ENCODE measurements at regions of chr6 and their contacts with region 1.

Region 1: DNA sequence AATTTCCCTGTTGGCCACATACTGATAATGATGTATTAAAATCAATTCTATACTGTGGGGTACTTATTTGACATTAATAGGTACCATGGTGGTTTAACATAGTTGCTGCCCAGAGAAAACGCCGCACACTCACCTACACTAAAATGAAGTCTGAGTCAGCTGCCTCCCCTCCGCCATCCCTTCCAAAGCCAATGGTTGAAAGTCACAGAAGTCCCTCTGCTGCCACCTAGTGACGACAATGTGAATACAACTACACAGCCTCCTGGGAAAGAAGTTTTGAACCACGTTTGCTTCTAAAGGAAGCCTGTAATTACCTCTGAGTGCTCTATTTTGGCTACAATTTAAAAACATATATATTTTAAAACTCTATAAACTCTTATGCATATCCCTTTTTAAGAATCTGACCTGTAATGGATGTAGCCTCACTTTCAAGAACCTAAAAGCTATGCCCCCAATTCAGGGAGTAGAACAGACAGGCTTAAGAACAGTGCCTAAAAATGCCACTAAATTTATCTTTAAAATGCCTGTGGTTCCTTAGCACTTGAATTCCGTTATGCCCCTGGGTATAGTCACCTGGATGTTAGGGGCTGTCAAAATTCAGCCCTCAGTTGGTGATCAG is 20.6 kb upstream of the ECI2 start:
- DNase-seq: peak; percentile 63 to 76
- ATAC-seq: peak; percentile 95 to 96
- H3K4me3 ChIP-seq: no peak overlapping the region
- H3K27ac ChIP-seq: peak overlapping the region; percentile 37 to 50; a peak in 2 of 6 replicates
- H3K4me1 ChIP-seq: peaks cover 5% of the 10 kb centered on the region; the same call in 2 of the 3 replicates
- CTCF ChIP-seq: peak; percentile 74
- EP300 ChIP-seq: no peak
- POLR2A ChIP-seq: no peak
- RAD21 ChIP-seq: peak; percentile 82 to 83

Region 2: DNA sequence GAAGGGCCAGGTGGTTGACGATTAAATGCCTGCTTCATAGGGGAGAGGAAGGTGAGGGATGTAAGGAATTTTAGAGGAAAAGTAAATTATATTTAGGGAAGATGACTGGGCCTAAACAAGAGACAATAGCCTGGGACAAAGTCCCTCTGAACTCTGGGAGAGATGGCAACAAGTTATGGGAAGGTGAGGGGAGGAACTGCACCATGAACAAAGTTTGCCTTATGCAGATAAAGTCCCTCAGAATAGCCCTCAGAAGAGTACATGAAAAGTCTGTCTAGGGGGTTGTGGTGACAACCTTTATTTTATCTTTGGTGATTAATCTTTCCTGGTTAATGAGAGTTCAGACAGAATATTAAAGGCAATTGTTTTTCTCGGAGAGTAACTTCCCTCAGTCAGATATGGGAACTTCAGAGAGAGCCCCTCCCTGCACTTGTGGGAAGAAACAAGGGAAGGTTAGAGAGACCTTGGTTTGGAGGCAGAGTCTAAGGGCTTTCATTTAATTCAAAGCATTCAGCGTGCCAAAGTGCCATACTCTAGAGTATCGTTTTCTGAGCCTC is 49.9 kb before region 1 on chr6:
- CTCF ChIA-PET with region 1: no interaction called
- POLR2A ChIA-PET with region 1: no interaction called
- DNase-seq: no peak
- ATAC-seq: no peak
- H3K4me3 ChIP-seq: no peak overlapping the region
- H3K27ac ChIP-seq: no peak overlapping the region
- H3K4me1 ChIP-seq: peaks cover 7% of the 10 kb centered on the region; the same call in 1 of the 3 replicates
- CTCF ChIP-seq: no peak
- EP300 ChIP-seq: no peak
- POLR2A ChIP-seq: no peak
- RAD21 ChIP-seq: no peak

Region 3: DNA sequence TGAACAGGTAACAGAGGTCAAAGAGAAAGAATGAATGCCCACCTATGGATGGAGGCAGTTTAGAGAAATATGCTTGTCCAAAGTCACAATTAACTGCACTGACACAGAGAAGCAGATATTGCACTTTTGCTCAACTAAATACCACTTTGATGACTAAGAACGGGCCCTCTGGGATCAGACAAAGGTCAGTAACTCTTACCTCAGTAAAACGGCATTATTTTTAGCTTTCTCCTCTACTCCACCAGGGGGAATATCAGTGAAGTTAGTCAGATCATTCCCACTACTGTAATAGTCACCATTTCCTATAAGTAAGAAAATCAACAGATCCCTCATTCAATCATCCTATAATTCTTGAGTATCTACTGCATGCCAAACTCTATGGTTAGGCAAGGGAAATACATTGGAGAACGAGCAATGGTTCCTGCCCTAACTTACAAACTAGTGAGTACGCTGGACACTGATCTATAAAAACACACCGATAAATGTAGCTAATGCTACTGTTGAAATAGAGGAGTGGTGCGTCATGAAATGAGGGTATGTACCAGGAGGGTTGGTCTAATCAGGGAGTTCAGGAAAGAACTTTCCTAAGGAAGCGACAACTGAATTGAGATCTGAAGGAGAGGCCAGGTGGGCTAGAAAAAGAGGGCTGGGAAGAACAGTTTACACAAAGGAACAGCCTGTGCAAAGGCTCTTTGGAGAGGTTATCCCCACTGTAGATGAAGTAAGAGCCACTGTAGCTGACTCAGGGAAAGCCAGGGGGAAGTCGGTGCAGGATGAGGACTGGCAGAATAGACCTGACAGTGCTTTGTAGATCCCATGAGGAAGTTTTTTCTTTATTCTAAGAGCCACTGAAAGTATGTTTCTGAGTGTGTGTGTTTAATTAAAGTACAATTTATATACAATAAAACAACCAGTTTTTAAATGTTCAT is 29.8 kb before region 1 on chr6:
- CTCF ChIA-PET with region 1: interaction called, 12 read pairs
- POLR2A ChIA-PET with region 1: no interaction called
- DNase-seq: peak; percentile 61 to 68
- ATAC-seq: peak; percentile 98
- H3K4me3 ChIP-seq: no peak overlapping the region
- H3K27ac ChIP-seq: peak overlapping the region; percentile 63 to 80; a peak in 5 of 6 replicates
- H3K4me1 ChIP-seq: peaks cover 24% of the 10 kb centered on the region
- CTCF ChIP-seq: 0 out of 3 replicates have a peak, but pooled peaks have one; percentile 21
- EP300 ChIP-seq: no peak
- POLR2A ChIP-seq: no peak
- RAD21 ChIP-seq: 0 out of 5 replicates have a peak, but pooled peaks of 1 of the 2 experiments have one; percentile 22

Region 4: DNA sequence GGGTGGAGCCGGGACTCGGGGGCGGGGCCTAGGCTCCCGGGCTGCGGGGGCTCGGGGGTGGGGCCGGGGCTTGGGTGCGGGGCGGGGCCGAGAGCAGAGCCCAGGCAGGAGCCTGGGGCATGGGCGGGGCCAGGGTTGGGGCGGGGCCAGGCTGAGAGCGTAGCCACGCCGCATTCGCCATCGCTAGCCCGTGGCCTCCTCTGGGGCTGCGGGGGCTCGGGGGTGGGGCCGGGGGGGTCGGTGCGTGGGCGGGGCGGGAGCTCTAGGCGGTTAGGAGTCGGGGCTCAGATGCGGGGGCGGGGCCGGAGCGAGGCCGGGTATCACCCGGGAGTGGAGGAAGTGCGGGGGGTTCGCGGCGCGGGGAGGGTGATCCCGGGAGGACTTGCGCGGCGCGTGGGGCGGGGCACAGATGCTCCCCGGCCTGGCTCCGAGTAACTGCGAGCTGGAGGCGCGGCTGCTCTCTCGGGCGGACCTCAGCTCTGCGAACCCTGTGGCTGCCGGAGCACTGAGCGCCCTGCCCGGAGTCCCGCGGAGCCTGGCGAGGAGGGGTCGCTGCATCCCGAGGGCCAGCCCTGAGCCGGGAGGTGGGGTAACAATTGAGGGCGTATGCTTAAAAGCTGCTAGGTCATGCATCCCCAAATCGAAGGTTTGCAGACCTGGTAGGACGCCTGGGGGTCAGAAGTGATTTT is 20.1 kb before region 1 on chr6:
- CTCF ChIA-PET with region 1: interaction called, 28 read pairs
- POLR2A ChIA-PET with region 1: interaction called, 3 read pairs
- DNase-seq: peak; percentile 74 to 90
- ATAC-seq: peak; percentile 81 to 84
- H3K4me3 ChIP-seq: peak overlapping the region; percentile 65
- H3K27ac ChIP-seq: peak overlapping the region; percentile 87 to 92
- H3K4me1 ChIP-seq: peaks cover 8% of the 10 kb centered on the region; the same call in 2 of the 3 replicates
- CTCF ChIP-seq: no peak
- EP300 ChIP-seq: no peak
- POLR2A ChIP-seq: peak; percentile 81
- RAD21 ChIP-seq: no peak

Region 5: DNA sequence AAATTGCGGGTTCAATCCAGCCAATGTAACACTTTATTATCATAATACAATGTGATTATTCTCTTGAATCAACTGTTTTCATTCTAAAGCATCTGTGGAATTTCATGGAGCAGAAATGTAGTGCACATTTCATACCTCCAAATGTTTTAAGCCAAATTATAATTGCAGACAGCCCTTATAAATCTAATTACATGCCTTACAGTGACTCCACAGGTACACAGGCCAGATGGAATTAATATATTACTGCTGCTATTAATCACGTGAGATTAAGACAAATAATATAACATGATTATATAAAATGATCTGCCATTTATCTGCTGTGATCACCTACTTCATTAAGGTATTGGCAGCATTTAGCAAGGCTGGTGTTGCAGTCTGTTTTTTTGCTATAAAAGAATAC is 10.9 kb before region 1 on chr6:
- CTCF ChIA-PET with region 1: interaction called, 10 read pairs
- POLR2A ChIA-PET with region 1: no interaction called
- DNase-seq: no peak
- ATAC-seq: no peak
- H3K4me3 ChIP-seq: no peak overlapping the region
- H3K27ac ChIP-seq: no peak overlapping the region
- H3K4me1 ChIP-seq: no peaks in the 10 kb centered on the region
- CTCF ChIP-seq: no peak
- EP300 ChIP-seq: no peak
- POLR2A ChIP-seq: no peak
- RAD21 ChIP-seq: no peak

Region 6: DNA sequence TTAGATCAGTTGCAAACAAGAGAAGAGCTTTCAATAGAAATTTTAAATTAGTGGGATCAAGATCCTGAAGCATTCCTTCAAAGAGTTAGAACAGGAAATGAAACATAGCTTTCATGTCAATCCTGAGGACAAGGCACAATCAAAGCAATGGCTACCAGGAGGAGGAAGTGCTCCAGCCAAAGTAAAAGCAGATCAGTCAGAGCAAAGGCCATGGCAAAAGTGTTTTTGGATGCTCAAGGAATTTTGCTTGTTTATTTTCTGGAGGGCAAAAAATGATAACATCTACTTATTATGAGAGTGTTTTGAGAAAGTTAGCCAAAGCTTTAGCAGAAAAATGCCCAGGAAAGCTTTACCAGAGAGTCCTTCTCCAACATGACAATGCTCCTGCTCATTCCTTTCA is 40.4 kb after region 1 on chr6:
- CTCF ChIA-PET with region 1: no interaction called
- POLR2A ChIA-PET with region 1: no interaction called
- DNase-seq: no peak
- ATAC-seq: no peak
- H3K4me3 ChIP-seq: no peak overlapping the region
- H3K27ac ChIP-seq: no peak overlapping the region
- H3K4me1 ChIP-seq: no peaks in the 10 kb centered on the region
- CTCF ChIP-seq: no peak
- EP300 ChIP-seq: no peak
- POLR2A ChIP-seq: no peak
- RAD21 ChIP-seq: no peak

Region 7: DNA sequence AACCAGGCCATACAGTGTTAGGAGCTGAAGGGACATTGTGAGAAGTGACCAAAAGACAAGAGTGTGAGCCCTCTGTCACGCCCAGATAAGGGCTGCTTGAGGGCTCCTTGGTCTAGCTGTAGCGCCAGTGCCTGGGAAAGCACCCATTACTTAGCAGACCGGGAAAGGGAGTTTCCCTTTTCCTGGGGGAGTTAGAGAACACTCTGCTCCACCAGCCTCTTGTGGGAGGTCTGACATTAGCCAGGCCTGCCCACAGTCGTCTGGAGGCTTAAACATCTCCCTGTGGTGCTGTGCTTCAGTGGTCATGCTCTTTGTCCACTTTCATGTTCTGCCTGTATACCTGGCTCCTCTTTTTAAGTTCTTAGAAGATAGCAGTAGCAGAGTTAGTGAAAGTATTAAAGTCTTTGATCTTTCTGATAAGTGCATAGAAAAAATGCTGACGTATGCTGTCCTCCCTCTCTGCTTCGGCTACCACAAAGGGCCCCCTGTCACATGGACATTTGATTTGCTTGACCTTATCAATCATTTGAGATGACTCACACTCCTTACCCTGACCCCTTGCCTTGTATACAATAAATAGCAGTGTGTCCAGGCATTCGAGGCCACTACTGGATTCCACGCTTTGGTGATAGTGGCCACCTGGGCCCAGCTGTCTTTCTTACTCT is 181.0 kb after region 1 on chr6:
- CTCF ChIA-PET with region 1: no interaction called
- POLR2A ChIA-PET with region 1: no interaction called
- DNase-seq: no peak
- ATAC-seq: no peak
- H3K4me3 ChIP-seq: no peak overlapping the region
- H3K27ac ChIP-seq: no peak overlapping the region
- H3K4me1 ChIP-seq: no peaks in the 10 kb centered on the region
- CTCF ChIP-seq: no peak
- EP300 ChIP-seq: no peak
- POLR2A ChIP-seq: no peak
- RAD21 ChIP-seq: no peak

Region 8: DNA sequence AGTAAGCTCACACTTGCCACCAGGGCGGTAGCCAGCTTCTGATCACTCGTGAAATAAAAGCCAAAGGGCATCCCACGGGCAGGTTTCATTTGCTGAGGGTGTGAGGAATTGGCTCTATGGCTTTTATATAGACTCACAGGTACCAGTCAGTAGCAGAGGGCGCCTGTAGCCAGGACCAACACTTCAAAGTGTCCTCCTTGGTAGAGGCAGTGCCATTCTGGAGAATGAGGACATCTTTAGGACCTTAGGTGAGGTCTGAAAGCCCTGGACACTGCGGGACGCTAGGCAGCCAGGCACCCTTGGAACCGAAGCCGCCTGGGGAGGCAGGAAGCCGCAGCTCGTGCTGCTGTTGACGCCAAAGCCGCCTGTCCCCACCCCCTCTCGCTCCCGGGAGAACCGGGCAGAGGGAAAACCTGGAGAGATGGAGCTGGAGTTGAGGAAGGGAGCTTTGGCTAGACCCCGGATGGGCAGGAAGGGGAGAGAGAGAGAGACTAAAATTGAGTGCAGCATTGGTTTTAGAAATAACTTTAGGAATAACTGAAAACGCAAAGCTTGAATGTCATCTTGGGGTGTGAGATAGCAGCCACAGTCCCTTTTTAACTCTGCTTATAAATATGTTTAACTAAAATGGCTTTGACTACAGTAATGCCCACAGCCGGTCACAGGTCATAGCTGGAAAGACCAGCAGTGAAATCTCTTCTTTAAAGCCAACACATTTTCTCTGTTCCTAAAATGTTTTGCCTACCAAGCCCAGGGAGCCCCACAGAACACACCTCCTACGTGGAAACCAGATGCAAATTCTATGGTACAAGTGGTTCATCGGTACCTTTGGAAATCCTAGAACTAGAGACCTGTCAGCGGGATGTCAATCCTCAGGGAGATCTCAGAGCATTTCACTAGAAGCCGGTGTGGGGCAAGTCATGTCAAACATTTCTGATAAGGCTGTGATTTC is 491.7 kb after region 1 on chr6:
- CTCF ChIA-PET with region 1: no interaction called
- POLR2A ChIA-PET with region 1: no interaction called
- DNase-seq: peak; percentile 70 to 81
- ATAC-seq: peak; percentile 93 to 95
- H3K4me3 ChIP-seq: peak overlapping the region; percentile 47
- H3K27ac ChIP-seq: peak overlapping the region; percentile 91 to 92
- H3K4me1 ChIP-seq: peaks cover 17% of the 10 kb centered on the region; the same call in 2 of the 3 replicates
- CTCF ChIP-seq: no peak
- EP300 ChIP-seq: no peak
- POLR2A ChIP-seq: peak; percentile 31; the same call in 1 of the 2 replicates
- RAD21 ChIP-seq: peak in 1 of 2 experiments; percentile 53; a peak in 4 of 5 replicates